ENCODE measurements at regions of chr19 and their contacts with region 1.

Region 1: DNA sequence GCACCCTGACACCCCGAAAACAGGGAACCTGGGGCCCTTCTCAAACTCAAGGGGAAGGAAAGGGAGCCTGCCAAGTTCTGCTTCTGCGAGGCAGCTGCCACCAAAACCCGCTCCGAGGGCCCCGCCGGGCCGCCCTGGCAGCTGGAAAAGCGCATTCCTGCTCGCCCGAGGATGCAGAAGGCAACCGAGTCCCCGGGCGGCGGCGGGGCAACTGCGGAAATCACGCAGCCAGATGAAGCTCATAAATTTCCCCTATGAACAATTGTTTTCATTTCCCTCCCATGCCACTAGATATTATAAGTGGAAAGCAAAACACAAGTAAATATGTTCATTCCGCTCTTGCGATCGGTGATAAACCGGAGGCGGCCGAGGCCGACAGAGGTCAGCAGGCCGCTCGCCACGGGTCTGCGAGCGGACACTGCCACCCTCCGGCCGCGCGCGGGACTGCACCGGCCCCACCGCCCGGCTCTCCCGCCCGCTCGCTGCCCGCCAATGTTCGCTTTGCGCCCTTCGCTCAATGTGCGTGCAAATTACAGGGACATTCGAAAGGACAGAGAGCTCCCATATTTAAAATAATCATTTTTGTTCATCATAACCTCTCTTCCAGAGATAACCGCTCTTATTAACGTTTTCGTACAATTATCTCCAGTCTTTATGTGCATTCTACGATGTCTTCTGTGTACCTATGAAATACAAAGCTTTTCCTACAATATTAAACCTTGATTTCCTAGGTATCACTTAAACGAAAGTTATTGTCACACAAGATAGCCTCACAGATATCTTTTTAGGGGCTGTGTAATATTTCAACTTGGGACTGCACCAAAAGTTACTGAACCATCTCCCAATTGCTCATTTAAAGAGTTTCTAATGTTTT is 120.8 kb upstream of the ZNF507 start:
- DNase-seq: no peak
- H3K4me3 ChIP-seq: peak overlapping the region; percentile 32
- CTCF ChIP-seq: peak; percentile 87

Region 2: DNA sequence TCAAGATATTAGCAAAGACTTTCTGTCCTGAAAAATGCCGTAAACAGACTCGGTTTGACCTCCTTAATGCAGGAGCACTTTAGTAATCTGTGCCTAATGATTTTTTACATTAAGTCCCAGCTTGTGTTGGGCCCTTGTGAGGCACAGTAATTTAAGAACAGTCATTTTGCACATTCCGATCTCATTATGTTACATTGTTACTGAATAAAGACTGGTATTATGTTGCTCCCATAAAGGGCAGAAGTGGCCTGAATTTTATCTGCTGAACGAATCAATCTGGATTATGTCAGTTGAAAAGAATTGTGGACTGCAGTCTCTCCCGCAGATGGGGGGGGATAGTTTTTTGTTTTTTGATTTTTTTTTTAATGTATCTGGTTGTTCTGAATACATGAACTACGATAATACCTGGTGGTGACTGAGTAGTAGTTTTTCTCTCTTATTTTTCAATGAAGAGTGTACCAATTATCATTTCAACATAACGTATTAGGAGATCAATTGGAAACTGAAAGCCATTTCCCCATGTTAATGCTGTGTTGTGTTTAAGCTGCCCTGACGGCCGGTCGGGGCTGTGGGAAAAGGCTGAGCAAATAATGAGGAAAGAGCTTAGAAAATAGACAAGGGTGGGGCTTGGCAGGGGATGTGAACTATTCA is 1562.3 kb before region 1 on chr19:
- CTCF ChIA-PET with region 1: interaction called, 75 read pairs
- POLR2A ChIA-PET with region 1: no interaction called
- DNase-seq: no peak
- H3K4me3 ChIP-seq: no peak overlapping the region
- CTCF ChIP-seq: no peak

Region 3: GRCh38 chr19:30682999-30683536 is 1541.5 kb before region 1 on chr19:
- CTCF ChIA-PET with region 1: interaction called, 72 read pairs
- POLR2A ChIA-PET with region 1: no interaction called
- DNase-seq: peak; percentile 23
- H3K4me3 ChIP-seq: no peak overlapping the region
- CTCF ChIP-seq: peak; percentile 82

Region 4: GRCh38 chr19:31054430-31054829 is 1170.2 kb before region 1 on chr19:
- CTCF ChIA-PET with region 1: interaction called, 21 read pairs
- POLR2A ChIA-PET with region 1: no interaction called
- DNase-seq: peak; percentile 5
- H3K4me3 ChIP-seq: no peak overlapping the region
- CTCF ChIP-seq: peak; percentile 85

Region 5: GRCh38 chr19:32238076-32238475 is 13.5 kb after region 1 on chr19:
- CTCF ChIA-PET with region 1: interaction called, 19 read pairs
- POLR2A ChIA-PET with region 1: no interaction called
- DNase-seq: no peak
- H3K4me3 ChIP-seq: no peak overlapping the region
- CTCF ChIP-seq: no peak